Heart right ventricle (tissue), 16 donors: ENCODE measurements at regions of chr4 and their contacts with region 1.

Region 1: GRCh38 chr4:13830449-13830848 is 202.9 kb upstream of the BOD1L1 start:
- DNase-seq: no peak
- ATAC-seq: no peak
- H3K4me3 ChIP-seq: no peak overlapping the region
- H3K27ac ChIP-seq: no peak overlapping the region
- H3K4me1 ChIP-seq: peaks cover 0 to 21% (median 10%) of the 10 kb centered on the region in 9 donors
- H3K27me3 ChIP-seq: no peaks in the 10 kb centered on the region
- CTCF ChIP-seq: no peak

Region 2: GRCh38 chr4:13750594-13750993 is 79.9 kb before region 1 on chr4:
- intact Hi-C with region 1: loop called in 1 of 10 experiments (anchors 5 kb)
- DNase-seq: no peak
- ATAC-seq: no peak
- H3K4me3 ChIP-seq: no peak overlapping the region
- H3K27ac ChIP-seq: no peak overlapping the region
- H3K4me1 ChIP-seq: no peaks in the 10 kb centered on the region
- H3K27me3 ChIP-seq: no peaks in the 10 kb centered on the region
- CTCF ChIP-seq: no peak